Ovary (tissue), 10 donors: ENCODE measurements at regions of chr5 and their contacts with region 1.

Region 1: GRCh38 chr5:67693956-67694809 is 497.6 kb upstream of the CD180 start:
- DNase-seq: peak; percentile 27 to 90 (median 85)
- H3K4me3 ChIP-seq: no peak overlapping the region
- H3K27ac ChIP-seq: peak overlapping the region; percentile 2 to 27
- H3K4me1 ChIP-seq: peaks cover 11% of the 10 kb centered on the region
- H3K27me3 ChIP-seq: no peaks in the 10 kb centered on the region
- CTCF ChIP-seq: no peak
- EP300 ChIP-seq: peak; percentile 90
- POLR2A ChIP-seq: no peak

Region 2: DNA sequence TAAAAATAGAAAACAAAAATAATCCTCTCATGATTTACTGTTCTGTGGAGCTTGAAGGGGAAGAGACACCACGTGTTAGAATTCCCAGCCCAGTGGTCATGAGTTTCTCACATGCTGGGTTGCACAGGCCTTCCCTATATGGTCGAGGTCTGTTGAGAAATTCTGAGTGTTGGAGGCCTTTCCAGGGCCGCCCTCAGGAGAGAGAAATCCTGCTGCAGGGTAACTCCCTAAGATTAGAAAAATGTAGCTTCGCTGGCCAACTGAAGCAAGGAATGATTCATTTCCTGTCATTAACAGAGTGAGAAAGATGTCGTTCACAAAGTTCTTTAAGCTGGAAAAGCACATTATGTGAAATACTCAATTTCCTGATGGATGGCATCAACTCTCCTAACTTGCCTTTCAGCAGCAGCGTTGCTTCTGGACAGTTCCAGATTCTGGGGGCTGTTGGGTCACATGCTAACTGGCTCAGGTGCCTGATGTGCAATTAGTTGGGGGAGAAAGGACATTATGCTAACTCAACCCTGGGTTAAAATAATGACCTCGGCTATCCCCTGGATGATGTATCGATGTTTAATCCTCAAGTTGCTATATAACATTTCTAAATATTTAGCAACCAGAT is 392.8 kb before region 1 on chr5:
- intact Hi-C with region 1: no loop called
- DNase-seq: peak in 4 of 5 donors; percentile 32 to 80 (median 61)
- H3K4me3 ChIP-seq: no peak overlapping the region
- H3K27ac ChIP-seq: no peak overlapping the region
- H3K4me1 ChIP-seq: peaks cover 7% of the 10 kb centered on the region
- H3K27me3 ChIP-seq: no peaks in the 10 kb centered on the region
- CTCF ChIP-seq: no peak
- EP300 ChIP-seq: peak; percentile 68
- POLR2A ChIP-seq: no peak

Region 3: DNA sequence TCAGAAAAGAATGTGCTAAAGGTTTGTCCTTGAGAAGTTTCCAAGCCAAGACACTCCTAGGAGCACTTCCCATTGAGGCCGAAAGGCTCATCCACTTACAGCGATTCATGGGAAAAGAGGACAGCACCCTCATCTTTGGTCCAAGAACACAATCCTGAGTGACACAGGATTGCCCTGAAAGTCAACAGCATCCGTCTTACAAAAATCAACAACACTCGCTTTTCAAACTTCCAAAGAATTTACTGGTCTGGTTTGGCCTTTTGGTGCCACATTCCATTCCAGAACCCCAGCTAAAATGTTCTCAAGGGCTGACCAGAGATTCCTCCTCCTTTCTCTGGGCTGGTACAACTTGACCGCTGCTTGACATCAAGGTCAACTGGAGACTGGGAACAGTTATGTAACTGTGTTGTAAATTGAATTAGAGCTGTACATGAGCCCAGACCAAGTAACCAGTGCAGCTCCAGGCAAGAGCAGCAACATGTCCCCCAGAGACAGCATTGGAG is 105.6 kb after region 1 on chr5:
- intact Hi-C with region 1: loop called in 1 of 4 experiments (anchors 10 kb)
- DNase-seq: peak in 2 of 5 donors; percentile 15 to 39
- H3K4me3 ChIP-seq: no peak overlapping the region
- H3K27ac ChIP-seq: no peak overlapping the region
- H3K4me1 ChIP-seq: peaks cover 1% of the 10 kb centered on the region
- H3K27me3 ChIP-seq: no peaks in the 10 kb centered on the region
- CTCF ChIP-seq: no peak
- EP300 ChIP-seq: no peak
- POLR2A ChIP-seq: no peak

Region 4: GRCh38 chr5:68252673-68253623 is 558.8 kb after region 1 on chr5:
- intact Hi-C with region 1: loop called in 1 of 4 experiments (anchors 10 kb)
- DNase-seq: peak; percentile 59 to 75 (median 62)
- H3K4me3 ChIP-seq: no peak overlapping the region
- H3K27ac ChIP-seq: peak overlapping the region in 1 of 2 donors; percentile 38
- H3K4me1 ChIP-seq: peaks cover 25% of the 10 kb centered on the region
- H3K27me3 ChIP-seq: no peaks in the 10 kb centered on the region
- CTCF ChIP-seq: peak; percentile 58 to 72 (median 62)
- EP300 ChIP-seq: no peak
- POLR2A ChIP-seq: no peak